ENCODE measurements at regions of chr19 and their contacts with region 1.

Region 1: DNA sequence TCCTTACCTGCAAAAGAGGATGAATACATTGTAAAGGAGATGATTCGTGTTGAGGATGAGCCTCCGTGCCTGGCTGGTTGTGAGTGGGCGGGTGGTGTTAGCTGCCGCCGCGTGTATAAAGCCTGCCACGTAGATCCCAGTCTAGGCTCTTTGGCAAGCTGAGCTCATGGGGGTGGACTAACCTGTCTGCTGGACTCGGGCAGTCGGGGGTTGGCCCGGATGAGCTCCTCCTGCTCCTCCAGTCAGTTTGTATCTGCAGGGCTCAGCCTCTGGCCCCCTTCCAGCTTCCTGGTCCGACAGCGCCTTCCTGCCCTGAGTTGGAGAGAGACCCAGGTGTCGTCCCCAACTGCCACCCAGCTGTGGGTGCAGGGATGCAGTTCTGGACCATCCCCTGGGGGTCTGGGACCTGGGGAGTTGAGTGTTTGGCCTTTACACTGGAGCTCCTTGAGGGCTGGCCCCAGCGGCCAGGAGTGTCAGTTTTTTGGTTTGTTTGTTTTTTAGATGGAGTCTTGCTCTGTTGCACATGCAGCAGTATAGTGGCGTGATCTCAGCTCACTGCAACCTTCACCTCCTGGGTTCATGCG is 20.9 kb downstream of the TECR start:
- DNase-seq: peak; percentile 58
- ATAC-seq: no peak
- H3K4me3 Mint-ChIP-seq: no peak overlapping the region
- H3K27ac Mint-ChIP-seq: peak overlapping the region; percentile 11
- H3K4me1 Mint-ChIP-seq: peaks cover 49% of the 10 kb centered on the region
- H3K27me3 Mint-ChIP-seq: no peaks in the 10 kb centered on the region

Region 2: GRCh38 chr19:14505488-14506432 is 44.5 kb before region 1 on chr19:
- CTCF ChIA-PET with region 1: interaction called, 7 read pairs
- POLR2A ChIA-PET with region 1: no interaction called
- intact Hi-C with region 1: loop called in 1 of 2 experiments (anchors 2 kb)
- DNase-seq: peak; percentile 89
- ATAC-seq: peak; percentile 76
- H3K4me3 Mint-ChIP-seq: no peak overlapping the region
- H3K27ac Mint-ChIP-seq: peak overlapping the region; percentile 66
- H3K4me1 Mint-ChIP-seq: peaks cover 57% of the 10 kb centered on the region
- H3K27me3 Mint-ChIP-seq: no peaks in the 10 kb centered on the region

Region 3: DNA sequence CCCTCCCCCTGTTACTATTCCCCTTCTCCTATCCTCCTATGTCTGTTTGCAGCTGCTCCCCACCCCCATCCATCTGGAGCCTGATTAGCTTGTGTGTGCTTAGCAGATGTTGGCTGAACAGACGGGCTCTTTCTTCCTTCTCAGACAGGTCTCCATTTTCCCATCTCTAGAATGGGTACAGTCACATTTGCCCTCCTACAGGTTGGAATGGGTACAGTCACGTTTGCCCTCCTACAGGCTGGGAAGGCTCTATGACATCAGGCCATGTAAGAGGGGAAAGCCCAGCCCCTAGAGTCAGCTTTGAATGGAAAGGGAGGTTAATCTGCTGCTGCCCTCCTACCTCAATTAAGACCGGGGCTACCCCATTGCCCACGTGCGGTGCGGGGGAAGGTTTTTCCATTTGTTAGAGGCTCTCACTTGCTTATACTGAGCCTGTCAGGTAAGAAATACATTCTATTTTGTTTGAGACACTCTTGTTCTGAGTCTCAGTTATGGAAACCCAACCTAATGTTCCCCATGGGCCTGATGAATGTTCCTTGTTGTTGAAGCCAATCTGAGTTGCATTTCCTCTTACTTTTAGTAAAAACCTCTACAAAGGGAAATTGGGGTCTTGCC is 30.4 kb after region 1 on chr19:
- CTCF ChIA-PET with region 1: no interaction called
- POLR2A ChIA-PET with region 1: no interaction called
- intact Hi-C with region 1: no loop called
- DNase-seq: peak; percentile 83
- ATAC-seq: peak; percentile 20
- H3K4me3 Mint-ChIP-seq: no peak overlapping the region
- H3K27ac Mint-ChIP-seq: peak overlapping the region; percentile 74
- H3K4me1 Mint-ChIP-seq: peaks cover 23% of the 10 kb centered on the region
- H3K27me3 Mint-ChIP-seq: no peaks in the 10 kb centered on the region

Measured in activated CD4-positive, alpha-beta T cell treated with anti-CD3 and anti-CD28 coated beads for 36 hours (primary cell).